Breast epithelium (tissue), 4 donors: ENCODE measurements at regions of chr14 and their contacts with region 1.

Region 1: DNA sequence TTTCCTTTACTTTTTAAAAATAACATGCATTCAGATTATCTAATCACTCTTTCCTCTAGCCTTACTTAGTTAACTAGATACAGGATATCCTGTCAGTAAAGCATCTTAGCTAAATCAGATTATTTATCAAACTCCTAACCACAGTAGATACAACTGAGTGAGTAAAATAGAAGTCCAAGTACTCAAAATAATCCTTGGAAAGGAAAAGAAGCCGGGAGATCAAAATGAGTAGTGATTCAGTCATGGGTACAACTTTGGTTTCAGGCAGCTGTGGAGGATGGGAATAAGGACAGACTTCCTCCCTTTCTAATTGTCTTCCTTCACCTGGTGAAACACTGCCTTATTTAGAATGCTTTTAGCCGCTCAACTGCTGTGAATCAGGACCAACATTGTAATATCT is 29.4 kb downstream of the GNG2 start:
- DNase-seq: no peak
- H3K4me3 ChIP-seq: no peak overlapping the region
- H3K27ac ChIP-seq: no peak overlapping the region
- H3K4me1 ChIP-seq: no peaks in the 10 kb centered on the region
- H3K27me3 ChIP-seq: no peaks in the 10 kb centered on the region
- CTCF ChIP-seq: no peak
- POLR2A ChIP-seq: no peak

Region 2: GRCh38 chr14:51219473-51220448 is 670.1 kb before region 1 on chr14:
- intact Hi-C with region 1: loop called (anchors 5 kb)
- DNase-seq: no peak
- H3K4me3 ChIP-seq: no peak overlapping the region
- H3K27ac ChIP-seq: no peak overlapping the region
- H3K4me1 ChIP-seq: no peaks in the 10 kb centered on the region
- H3K27me3 ChIP-seq: no peaks in the 10 kb centered on the region
- CTCF ChIP-seq: peak in 2 of 3 donors; percentile 50 to 58
- POLR2A ChIP-seq: no peak

Region 3: GRCh38 chr14:52086711-52087110 is 196.9 kb after region 1 on chr14:
- intact Hi-C with region 1: no loop called
- DNase-seq: no peak
- H3K4me3 ChIP-seq: no peak overlapping the region
- H3K27ac ChIP-seq: no peak overlapping the region
- H3K4me1 ChIP-seq: no peaks in the 10 kb centered on the region
- H3K27me3 ChIP-seq: no peaks in the 10 kb centered on the region
- CTCF ChIP-seq: no peak
- POLR2A ChIP-seq: no peak